Calu3 (cell line): ENCODE measurements at regions of chr1 and their contacts with region 1.

Region 1: DNA sequence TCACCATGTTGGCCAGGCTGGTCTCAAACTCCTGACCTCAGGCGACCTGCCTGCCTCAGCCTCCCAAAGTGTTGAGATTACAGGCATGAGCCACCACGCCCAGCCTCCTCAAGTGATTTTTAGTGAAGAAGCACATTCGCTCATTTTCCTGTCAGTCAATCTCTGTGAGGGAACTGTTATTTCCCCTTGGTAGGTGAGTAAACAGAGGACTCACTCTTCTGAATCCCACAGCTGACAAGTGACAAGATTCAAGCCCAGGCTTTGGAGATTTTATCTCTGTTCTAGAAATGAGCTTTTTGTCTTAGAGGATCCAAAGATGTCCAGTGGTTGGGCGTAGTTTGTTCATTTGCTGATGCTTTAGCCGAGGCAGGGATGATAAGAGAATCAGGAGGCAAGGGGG is 43.9 kb upstream of the TACSTD2 start:
- DNase-seq: peak; percentile 24
- H3K4me3 Mint-ChIP-seq: peak overlapping the region; percentile 57
- H3K27ac Mint-ChIP-seq: peak overlapping the region; percentile 82
- H3K4me1 Mint-ChIP-seq: peaks cover 60% of the 10 kb centered on the region
- H3K27me3 Mint-ChIP-seq: no peaks in the 10 kb centered on the region
- CTCF ChIP-seq: no peak

Region 2: DNA sequence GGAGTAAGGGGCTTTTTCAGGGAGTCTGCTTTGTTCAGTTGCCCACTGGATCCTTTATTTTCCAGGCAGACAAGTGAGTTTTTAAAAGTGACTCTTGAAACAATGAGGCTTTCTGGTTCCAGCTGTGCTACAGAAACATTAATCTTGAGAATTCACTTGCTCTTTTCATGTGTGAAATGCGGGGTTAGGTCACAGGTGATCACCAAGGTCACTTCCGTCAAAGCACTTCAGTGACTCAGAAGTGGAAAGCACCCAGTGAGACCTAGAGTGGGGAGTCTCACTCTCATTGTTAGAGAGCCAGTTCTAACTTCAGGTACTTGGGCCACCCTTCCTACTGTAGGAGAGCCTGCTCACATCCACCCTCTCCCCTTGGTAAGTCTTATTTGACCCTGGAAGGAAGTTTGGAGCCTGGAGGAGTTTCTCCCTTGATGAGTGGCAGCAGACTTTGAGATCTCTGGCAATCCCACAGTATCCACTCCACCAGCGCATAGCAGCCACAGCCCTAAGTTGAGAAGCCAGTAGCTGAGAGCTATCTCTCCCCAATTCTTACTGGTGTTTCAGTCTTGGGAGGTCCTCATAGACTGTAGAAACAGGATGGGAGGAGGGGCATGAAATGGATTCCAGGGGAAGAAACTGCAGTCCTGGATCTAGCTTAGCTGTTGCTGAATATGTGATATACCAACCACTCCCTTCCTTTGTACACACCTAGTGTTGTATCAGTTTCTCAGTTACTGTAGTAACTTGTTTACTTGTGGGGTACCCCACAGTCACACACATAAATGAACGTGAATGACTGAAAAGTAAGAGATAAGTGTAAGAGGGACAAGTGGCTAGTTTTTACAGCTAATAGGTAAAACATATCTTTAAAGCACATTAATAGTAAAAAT is 47.0 kb before region 1 on chr1:
- CTCF ChIA-PET with region 1: interaction called, 4 read pairs
- intact Hi-C with region 1: loop called (anchors 1 kb)
- DNase-seq: peak; percentile 50
- H3K4me3 Mint-ChIP-seq: peak overlapping the region; percentile 100
- H3K27ac Mint-ChIP-seq: peak overlapping the region; percentile 97
- H3K4me1 Mint-ChIP-seq: peaks cover 56% of the 10 kb centered on the region
- H3K27me3 Mint-ChIP-seq: no peaks in the 10 kb centered on the region
- CTCF ChIP-seq: no peak

Region 3: DNA sequence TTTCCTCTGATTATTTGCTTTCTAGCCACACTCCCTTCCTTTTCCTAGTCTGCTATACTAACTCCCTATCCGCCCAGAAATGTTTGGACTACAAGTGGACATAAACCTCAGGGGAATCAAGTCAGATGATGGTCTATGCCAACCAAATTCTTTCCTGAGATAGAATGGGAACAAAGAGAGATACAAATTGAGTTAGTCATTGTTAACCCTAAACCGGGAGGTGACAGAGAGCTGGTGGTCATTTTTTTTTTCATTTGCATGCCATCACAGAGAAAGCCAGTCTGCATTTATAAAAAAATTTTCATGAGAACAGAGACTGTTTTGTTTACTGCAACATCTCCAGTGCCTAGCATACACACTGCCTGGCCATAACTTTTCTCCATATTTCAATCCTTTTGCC is 43.9 kb after region 1 on chr1:
- CTCF ChIA-PET with region 1: no interaction called
- intact Hi-C with region 1: no loop called
- DNase-seq: no peak
- H3K4me3 Mint-ChIP-seq: no peak overlapping the region
- H3K27ac Mint-ChIP-seq: no peak overlapping the region
- H3K4me1 Mint-ChIP-seq: peaks cover 4% of the 10 kb centered on the region
- H3K27me3 Mint-ChIP-seq: no peaks in the 10 kb centered on the region
- CTCF ChIP-seq: no peak

Region 4: DNA sequence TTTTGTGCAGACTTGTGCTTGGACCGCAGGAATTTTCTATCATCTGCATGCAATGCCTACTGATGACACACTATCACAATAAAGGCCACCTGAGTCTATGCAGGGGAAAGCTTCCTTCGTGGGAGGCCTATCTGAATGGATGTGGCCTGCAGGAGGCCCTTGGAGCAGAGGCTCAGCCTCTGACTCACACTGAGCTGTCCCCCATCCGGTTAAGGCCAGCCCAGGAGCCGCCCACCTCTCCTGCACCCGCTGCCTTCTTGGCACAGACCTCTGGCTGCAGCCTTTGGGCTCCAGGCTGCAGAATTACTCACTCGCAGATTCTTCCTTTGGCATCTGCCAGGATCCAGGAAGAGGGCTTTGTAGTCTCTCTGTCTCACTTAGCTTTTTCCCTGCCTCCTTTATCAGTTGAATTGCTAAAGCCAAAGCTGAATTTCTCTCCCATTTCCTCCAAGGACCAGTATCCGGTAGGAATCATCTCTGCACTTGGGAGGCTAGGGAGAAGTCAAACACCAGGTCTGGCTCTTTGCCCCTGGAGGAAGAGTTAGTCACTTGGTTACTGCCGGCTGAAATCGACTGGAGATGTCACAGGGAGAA is 228.0 kb after region 1 on chr1:
- CTCF ChIA-PET with region 1: no interaction called
- intact Hi-C with region 1: no loop called
- DNase-seq: peak; percentile 90
- H3K4me3 Mint-ChIP-seq: peak overlapping the region; percentile 38
- H3K27ac Mint-ChIP-seq: peak overlapping the region; percentile 57
- H3K4me1 Mint-ChIP-seq: peaks cover 44% of the 10 kb centered on the region
- H3K27me3 Mint-ChIP-seq: no peaks in the 10 kb centered on the region
- CTCF ChIP-seq: peak; percentile 27